Activated T-helper 1 cell treated with anti-CD3 and anti-CD28 coated beads, Interleukin-12 subunit alpha, Interleukin-12 subunit beta, Interleukin-2, Interleukin-4 antibody, amounts not matched to agents 30 ng/mL and 10 ng/mL and 1 ng/mL, durations not matched to agents 14 hours and 24 hours and 36 hours (primary cell): ENCODE measurements at regions of chr1 and their contacts with region 1.

Region 1: GRCh38 chr1:201170533-201171062 is 16.3 kb upstream of the TMEM9 start:
- DNase-seq: peak; percentile 65
- H3K4me3 Mint-ChIP-seq: peak overlapping the region; percentile 76
- H3K27ac Mint-ChIP-seq: peak overlapping the region; percentile 65
- H3K4me1 Mint-ChIP-seq: peaks cover 6% of the 10 kb centered on the region
- H3K27me3 Mint-ChIP-seq: peaks cover 21% of the 10 kb centered on the region

Region 2: DNA sequence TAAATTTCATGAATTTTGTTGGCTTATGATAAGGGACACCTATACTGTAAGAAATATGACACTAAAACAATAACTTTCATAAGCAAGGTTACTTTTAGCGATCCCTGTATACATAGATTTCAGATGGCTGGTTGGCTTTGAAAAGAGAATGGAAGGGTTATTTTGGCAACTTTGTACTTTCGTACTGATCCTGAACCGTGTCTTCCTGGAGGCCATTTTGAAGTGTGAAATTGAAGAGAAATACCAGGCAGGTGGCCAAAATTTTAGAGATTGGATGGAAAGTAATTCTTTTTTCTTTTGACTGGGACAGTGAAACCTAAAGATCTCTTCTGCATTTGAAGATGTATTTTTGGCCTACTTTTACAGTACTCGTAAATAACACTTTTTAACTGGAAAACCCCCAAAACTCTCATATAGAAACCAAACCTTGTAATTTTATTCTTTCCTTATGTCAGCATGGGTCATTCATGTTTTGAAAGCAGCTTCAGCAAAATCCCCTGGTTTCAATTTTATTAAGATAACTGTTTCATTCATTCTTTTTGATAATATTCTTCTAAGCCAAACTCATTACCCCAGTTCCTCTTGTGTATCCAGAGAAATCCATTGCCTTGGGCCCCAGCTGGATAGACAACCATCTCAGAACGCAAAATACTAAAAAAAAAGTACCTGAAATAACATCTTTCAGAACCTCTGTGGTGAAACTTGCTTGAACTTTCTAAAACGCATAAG is 722.4 kb before region 1 on chr1:
- intact Hi-C with region 1: no loop called
- DNase-seq: no peak
- H3K4me3 Mint-ChIP-seq: peak overlapping the region; percentile 53
- H3K27ac Mint-ChIP-seq: peak overlapping the region; percentile 97
- H3K4me1 Mint-ChIP-seq: peaks cover 59% of the 10 kb centered on the region
- H3K27me3 Mint-ChIP-seq: no peaks in the 10 kb centered on the region

Region 3: DNA sequence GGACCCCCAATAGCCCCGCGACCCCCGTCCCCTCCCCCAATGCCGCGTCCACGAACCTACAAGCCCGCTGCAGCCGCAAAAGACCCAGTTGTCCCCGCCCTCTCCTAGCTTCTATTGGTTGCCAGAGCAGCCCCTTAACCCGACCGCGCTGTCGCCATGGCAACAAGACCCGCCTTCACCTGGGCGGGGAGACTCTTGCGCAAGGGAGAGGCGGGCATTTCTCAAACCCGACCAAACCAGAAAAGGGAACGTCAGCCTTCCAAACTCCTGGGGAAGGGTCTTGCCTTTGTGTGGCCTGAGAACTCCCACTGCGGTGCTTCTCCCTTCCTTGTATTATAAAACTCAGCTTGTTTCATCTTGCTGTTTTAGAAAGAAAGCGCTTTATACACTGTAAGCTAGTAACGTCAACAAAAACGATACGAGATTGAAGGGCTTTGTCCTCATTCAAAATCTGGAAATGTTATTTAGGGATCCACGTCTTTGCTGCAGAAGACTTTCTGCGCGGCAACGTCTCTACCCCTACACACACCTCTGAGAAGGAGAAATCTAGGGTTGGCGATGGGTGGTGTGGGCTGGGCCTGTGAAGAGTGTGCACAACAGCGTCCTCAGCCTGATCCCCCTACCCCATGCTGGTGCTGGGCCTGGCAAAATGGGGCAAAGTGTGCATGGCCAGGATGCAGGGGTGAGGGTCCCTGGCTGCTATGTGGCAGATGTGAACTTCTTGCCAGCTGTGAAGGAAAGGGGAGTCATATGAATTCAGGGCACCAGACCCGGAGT is 16.0 kb before region 1 on chr1 and contains the start of gene TMEM9:
- intact Hi-C with region 1: loop called (anchors 1 kb)
- DNase-seq: peak; percentile 95
- H3K4me3 Mint-ChIP-seq: peak within 1 kb of the TSS; percentile 85
- H3K27ac Mint-ChIP-seq: peak within 1 kb of the TSS; percentile 88
- H3K4me1 Mint-ChIP-seq: peaks cover 23% of the 10 kb centered on the region
- H3K27me3 Mint-ChIP-seq: peaks cover 18% of the 10 kb centered on the region
- total RNA-seq, gene TMEM9: 13.2 and 13.9 TPM in 2 replicates

Region 4: DNA sequence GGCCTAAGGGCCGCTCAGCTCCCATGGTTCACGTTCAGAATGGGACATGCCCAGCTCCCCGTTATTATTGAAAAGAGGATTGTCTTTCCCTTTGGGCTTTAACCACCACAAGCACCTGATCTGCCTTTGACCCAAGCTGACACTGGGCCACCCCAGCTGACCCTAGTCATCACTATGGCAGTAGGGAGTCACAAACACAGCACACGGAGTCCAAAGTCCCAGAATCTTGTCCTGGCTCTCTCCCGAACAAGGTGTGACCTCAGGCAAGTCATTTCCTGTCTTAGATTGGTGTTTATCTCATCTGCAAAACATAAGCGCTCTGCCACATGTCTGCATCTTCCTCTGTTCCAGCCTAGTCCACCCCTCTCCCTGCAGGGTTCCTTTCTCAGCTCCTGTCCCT is 51.5 kb after region 1 on chr1:
- intact Hi-C with region 1: loop called (anchors 2 kb)
- DNase-seq: no peak
- H3K4me3 Mint-ChIP-seq: no peak overlapping the region
- H3K27ac Mint-ChIP-seq: no peak overlapping the region
- H3K4me1 Mint-ChIP-seq: no peaks in the 10 kb centered on the region
- H3K27me3 Mint-ChIP-seq: no peaks in the 10 kb centered on the region

Region 5: GRCh38 chr1:201436393-201436792 is 265.8 kb after region 1 on chr1:
- intact Hi-C with region 1: loop called (anchors 10 kb)
- DNase-seq: no peak
- H3K4me3 Mint-ChIP-seq: no peak overlapping the region
- H3K27ac Mint-ChIP-seq: no peak overlapping the region
- H3K4me1 Mint-ChIP-seq: peaks cover 8% of the 10 kb centered on the region
- H3K27me3 Mint-ChIP-seq: peaks cover 20% of the 10 kb centered on the region

Region 6: DNA sequence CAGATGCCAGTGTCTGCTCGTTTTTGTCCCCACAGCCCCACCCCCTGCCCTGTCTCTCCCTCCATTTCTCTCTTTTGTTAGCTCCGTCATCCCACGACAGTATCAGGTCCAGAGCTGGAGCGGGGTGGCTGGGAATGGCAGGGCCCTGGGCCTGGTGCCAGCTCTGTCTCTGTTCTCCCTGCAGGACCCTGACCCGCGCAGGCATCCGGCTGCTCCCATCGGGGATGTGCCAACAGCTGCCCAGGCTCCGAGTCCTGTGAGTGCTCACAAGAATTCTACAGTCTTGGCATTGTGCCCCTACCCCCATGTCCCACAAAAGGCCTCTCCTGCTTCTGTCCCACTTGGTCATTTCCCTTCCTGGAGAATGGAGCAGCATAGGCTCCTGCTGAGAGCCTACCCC is 1133.8 kb after region 1 on chr1:
- intact Hi-C with region 1: loop called (anchors 5 kb)
- DNase-seq: no peak
- H3K4me3 Mint-ChIP-seq: no peak overlapping the region
- H3K27ac Mint-ChIP-seq: no peak overlapping the region
- H3K4me1 Mint-ChIP-seq: no peaks in the 10 kb centered on the region
- H3K27me3 Mint-ChIP-seq: peaks cover 2% of the 10 kb centered on the region